IMR-90 (cell line): ENCODE measurements at regions of chrX and their contacts with region 1.

Region 1: DNA sequence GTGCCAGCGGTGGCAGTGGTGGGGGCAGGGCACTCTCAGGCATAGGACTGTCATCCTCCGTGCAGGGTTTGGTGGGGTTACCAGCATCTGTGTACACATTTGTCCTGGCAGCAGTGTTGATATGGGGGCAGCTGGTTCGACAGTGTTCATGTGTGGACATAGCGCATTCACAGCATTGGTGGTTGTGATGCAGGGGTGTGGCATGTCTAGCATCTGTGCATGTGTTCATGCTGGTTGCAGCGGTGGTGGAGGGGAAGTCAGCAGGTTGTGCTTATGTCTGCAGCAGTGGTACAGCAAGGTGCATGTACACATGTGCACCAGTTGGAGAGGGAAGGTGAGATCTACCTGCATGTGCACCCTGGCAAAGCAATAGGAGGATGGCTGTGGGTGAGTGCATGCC is 75.3 kb upstream of the ZXDB start:
- DNase-seq: no peak
- ATAC-seq: no peak
- H3K4me3 ChIP-seq: no peak overlapping the region
- H3K27ac ChIP-seq: no peak overlapping the region
- H3K4me1 ChIP-seq: no peaks in the 10 kb centered on the region
- H3K27me3 ChIP-seq: no peaks in the 10 kb centered on the region
- CTCF ChIP-seq: no peak
- POLR2A ChIP-seq: no peak
- RAD21 ChIP-seq: no peak

Region 2: GRCh38 chrX:56783450-56783831 is 733.0 kb before region 1 on chrX:
- CTCF ChIA-PET with region 1: no interaction called
- POLR2A ChIA-PET with region 1: no interaction called
- dilution Hi-C with region 1: no loop called
- in situ Hi-C with region 1: no loop called
- intact Hi-C with region 1: no loop called
- DNase-seq: peak; percentile 65
- ATAC-seq: peak; percentile 24; the same call in 1 of the 2 replicates
- H3K4me3 ChIP-seq: peak overlapping the region; percentile 42
- H3K27ac ChIP-seq: peak overlapping the region; percentile 57; the same call in 1 of the 2 replicates
- H3K4me1 ChIP-seq: no peaks in the 10 kb centered on the region
- H3K27me3 ChIP-seq: no peaks in the 10 kb centered on the region
- CTCF ChIP-seq: peak; percentile 51
- POLR2A ChIP-seq: no peak
- RAD21 ChIP-seq: peak; percentile 62

Region 3: GRCh38 chrX:57607295-57608187 is 91.0 kb after region 1 on chrX:
- CTCF ChIA-PET with region 1: no interaction called
- POLR2A ChIA-PET with region 1: no interaction called
- dilution Hi-C with region 1: no loop called
- in situ Hi-C with region 1: loop called (anchors 25 kb)
- intact Hi-C with region 1: no loop called
- DNase-seq: no peak
- ATAC-seq: no peak
- H3K4me3 ChIP-seq: no peak overlapping the region
- H3K27ac ChIP-seq: no peak overlapping the region
- H3K4me1 ChIP-seq: no peaks in the 10 kb centered on the region
- H3K27me3 ChIP-seq: no peaks in the 10 kb centered on the region
- CTCF ChIP-seq: no peak
- POLR2A ChIP-seq: no peak
- RAD21 ChIP-seq: no peak